Posterior vena cava (tissue), 2 donors: ENCODE measurements at regions of chr4 and their contacts with region 1.

Region 1: DNA sequence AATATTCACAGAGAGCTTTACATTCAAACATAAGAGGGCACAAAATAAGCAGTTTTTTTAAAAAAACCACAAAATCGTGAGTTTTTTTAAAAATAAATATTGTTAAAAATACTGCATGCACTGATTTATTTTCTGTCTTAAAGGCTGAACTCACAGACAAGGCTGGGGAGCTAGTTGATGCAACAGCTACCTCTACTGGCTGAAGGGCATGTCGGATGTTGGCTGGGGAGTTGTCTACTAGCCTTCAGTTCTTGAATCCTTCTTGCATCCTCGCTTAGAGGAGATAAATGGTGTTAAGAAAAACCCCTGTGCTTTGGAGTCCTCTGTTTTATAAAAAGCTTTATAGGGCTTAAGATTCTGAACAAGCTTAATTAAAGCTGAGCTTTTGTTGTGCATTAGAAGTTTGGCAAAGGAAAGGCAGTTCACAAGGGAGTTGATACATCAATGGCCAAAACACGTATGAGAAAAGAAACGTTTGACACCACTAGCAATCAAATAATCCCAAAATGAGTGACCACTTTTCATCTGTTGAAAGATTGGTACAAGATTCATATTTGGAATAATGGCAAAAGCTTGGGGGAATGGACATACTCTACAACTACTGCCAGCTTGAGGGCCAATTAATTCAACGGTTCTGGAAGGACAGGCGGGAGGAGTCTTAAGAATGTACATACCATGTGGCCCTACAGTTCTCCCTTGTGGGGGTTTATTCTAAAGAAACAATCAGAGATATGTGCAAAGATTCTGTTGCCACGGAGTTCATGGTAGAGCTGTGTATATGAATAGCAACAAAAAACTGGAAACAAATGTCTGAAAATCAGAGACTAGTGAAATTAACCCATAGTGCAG is 94.7 kb downstream of the SEL1L3 start:
- DNase-seq: no peak

Region 2: DNA sequence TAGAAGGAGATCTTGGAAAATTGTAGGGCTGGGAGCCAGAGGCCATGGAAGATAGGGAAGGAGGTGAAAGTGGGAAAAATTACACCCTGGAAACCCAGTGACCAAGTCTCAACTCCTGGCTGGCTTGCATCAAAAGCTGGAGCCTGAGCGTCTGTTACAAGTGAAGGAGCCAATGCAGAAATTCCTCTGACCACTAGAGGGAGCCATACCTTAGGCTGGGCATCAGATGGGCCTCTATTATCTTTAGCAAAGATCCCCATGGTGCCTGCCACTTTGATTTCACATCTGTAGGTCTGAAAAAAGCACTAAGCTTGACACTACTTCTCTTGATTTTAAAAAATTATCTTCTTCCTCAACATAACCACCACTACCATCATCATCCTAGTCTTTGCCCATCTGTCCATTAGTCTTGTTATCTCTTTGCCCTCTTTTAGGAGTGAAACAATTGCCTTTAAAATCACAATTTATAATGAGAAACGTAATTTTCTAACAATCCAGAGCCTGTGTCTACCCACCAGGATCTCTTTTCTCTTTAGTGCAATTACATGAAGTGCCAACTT is 328.1 kb before region 1 on chr4:
- intact Hi-C with region 1: loop called (anchors 5 to 10 kb)
- DNase-seq: no peak